GM12878 (cell line): ENCODE measurements at regions of chr9 and their contacts with region 1.

Region 1: DNA sequence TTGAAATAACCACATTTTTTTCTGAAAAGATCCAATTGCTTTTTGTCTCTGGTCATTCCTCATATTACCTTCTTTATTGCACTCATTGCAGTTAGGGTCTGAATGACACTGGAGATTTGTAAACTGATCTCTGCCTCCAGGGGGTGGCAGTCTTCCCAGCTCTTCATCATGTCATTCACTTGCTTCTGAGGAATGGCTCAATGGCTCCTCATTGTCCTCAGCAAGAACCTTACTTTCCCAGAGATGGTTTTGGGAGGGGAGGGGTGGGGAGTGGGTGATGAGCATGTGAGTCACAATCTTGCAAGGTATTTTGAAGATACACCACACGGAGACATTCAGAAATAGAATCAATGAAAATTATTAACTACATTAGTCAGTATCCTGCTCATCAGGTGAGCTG is 159.8 kb upstream of the GAS1 start:
- DNase-seq: no peak
- ATAC-seq: no peak
- H3K4me3 ChIP-seq: no peak overlapping the region
- H3K27ac ChIP-seq: no peak overlapping the region
- H3K4me1 ChIP-seq: no peaks in the 10 kb centered on the region
- H3K27me3 ChIP-seq: peaks cover 0 to 1% of the 10 kb centered on the region in 2 experiments; a peak in 2 of 4 replicates
- CTCF ChIP-seq: peak; percentile 31 to 37 (median 31); a peak in 4 of 6 replicates
- EP300 ChIP-seq: no peak
- POLR2A ChIP-seq: no peak
- RAD21 ChIP-seq: peak; percentile 33; the same call in 1 of the 2 replicates

Region 2: DNA sequence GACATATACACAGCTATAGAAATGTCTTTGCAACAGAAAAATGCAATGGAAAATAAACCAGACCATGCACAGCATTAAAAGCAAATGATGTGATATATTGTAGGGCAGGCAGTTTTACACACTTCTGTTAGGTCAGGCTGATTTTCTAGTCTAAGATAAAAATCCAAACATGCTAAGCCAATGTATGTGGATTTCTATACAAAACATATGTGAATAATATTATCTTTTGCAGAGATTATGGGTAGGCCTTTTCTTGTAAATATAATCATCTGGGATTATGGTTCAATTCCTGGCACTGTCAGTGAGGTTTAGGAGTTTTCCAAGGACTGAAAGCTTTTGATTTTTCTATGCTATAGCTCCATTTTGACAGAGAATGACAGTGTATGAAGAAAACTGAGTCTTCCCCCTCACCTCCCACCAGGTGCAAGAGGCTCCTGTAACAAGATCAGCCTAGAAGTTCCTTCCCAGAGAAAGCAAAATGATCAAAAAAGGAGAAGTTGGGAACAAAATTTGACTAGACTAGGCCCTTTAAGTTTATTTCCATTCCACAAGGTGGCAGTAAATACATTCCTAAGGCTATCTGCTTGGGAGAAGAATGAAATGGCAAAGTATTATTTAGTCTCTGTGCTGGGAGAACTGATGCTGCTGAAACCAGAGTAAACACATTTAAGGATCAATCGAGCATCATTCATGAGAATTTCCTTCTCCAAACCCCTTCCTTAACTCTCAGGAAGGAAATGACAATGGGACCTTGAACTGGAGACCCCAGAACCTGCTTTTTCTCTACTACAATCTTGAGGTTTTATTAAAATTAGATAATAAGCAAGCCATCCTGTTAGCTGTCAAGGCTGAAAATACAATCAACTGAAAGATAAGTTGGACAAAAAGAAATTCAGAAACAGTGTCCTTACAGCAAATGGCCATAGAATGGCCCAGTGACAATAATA is 619.9 kb before region 1 on chr9:
- CTCF ChIA-PET with region 1: no interaction called
- POLR2A ChIA-PET with region 1: no interaction called
- RAD21 ChIA-PET with region 1: no interaction called
- SMC1A ChIA-PET with region 1: no interaction called
- in situ Hi-C with region 1: no loop called
- intact Hi-C with region 1: loop called (anchors 10 kb)
- DNase-seq: no peak
- ATAC-seq: peak; percentile 65
- H3K4me3 ChIP-seq: no peak overlapping the region
- H3K27ac ChIP-seq: no peak overlapping the region
- H3K4me1 ChIP-seq: no peaks in the 10 kb centered on the region
- H3K27me3 ChIP-seq: no peaks in the 10 kb centered on the region
- CTCF ChIP-seq: peak; percentile 40 to 55 (median 50); a peak in 5 of 6 replicates
- EP300 ChIP-seq: no peak
- POLR2A ChIP-seq: no peak
- RAD21 ChIP-seq: peak; percentile 83

Region 3: GRCh38 chr9:87080512-87081264 is 26.4 kb before region 1 on chr9:
- CTCF ChIA-PET with region 1: no interaction called
- POLR2A ChIA-PET with region 1: no interaction called
- RAD21 ChIA-PET with region 1: no interaction called
- SMC1A ChIA-PET with region 1: no interaction called
- in situ Hi-C with region 1: no loop called
- intact Hi-C with region 1: no loop called
- DNase-seq: no peak
- ATAC-seq: no peak
- H3K4me3 ChIP-seq: no peak overlapping the region
- H3K27ac ChIP-seq: no peak overlapping the region
- H3K4me1 ChIP-seq: no peaks in the 10 kb centered on the region
- H3K27me3 ChIP-seq: no peaks in the 10 kb centered on the region
- CTCF ChIP-seq: 0 out of 6 replicates have a peak, but pooled peaks of 2 of the 3 experiments have one; percentile 1 to 13
- EP300 ChIP-seq: no peak
- POLR2A ChIP-seq: no peak
- RAD21 ChIP-seq: no peak